ENCODE measurements at regions of chr9 and their contacts with region 1.

Region 1: GRCh38 chr9:109012876-109013678 is at the start of gene CTNNAL1:
- DNase-seq: peak; percentile 68 to 95 (median 85)
- ATAC-seq: peak; percentile 82
- H3K4me3 ChIP-seq: peak within 1 kb of the TSS; percentile 65
- H3K4me3 Mint-ChIP-seq: peak within 1 kb of the TSS; percentile 100
- H3K27ac ChIP-seq: peak within 1 kb of the TSS; percentile 43 to 65
- H3K27ac Mint-ChIP-seq: peak within 1 kb of the TSS; percentile 88
- H3K4me1 ChIP-seq: peaks cover 16% of the 10 kb centered on the region
- H3K4me1 Mint-ChIP-seq: peaks cover 32% of the 10 kb centered on the region
- H3K27me3 ChIP-seq: no peaks in the 10 kb centered on the region
- H3K27me3 Mint-ChIP-seq: peaks cover 10% of the 10 kb centered on the region
- CTCF ChIP-seq: no peak
- total RNA-seq, gene CTNNAL1: 4.9 to 5.3 TPM

Region 2: GRCh38 chr9:107637421-107638420 is 1375.4 kb before region 1 on chr9:
- CTCF ChIA-PET with region 1: no interaction called
- POLR2A ChIA-PET with region 1: no interaction called
- intact Hi-C with region 1: no loop called
- DNase-seq: peak in 3 of 14 experiments; percentile 24 to 72 (median 63)
- ATAC-seq: no peak
- H3K4me3 ChIP-seq: peak overlapping the region; percentile 25
- H3K4me3 Mint-ChIP-seq: no peak overlapping the region
- H3K27ac ChIP-seq: peak overlapping the region in 1 of 2 donors; percentile 44
- H3K27ac Mint-ChIP-seq: no peak overlapping the region
- H3K4me1 ChIP-seq: peaks cover 3% of the 10 kb centered on the region
- H3K4me1 Mint-ChIP-seq: peaks cover 9% of the 10 kb centered on the region
- H3K27me3 ChIP-seq: peaks cover 11 to 17% of the 10 kb centered on the region in 2 experiments
- H3K27me3 Mint-ChIP-seq: peaks cover 62% of the 10 kb centered on the region
- CTCF ChIP-seq: no peak

Region 3: GRCh38 chr9:109098171-109098959 is 85.3 kb after region 1 on chr9:
- CTCF ChIA-PET with region 1: no interaction called
- POLR2A ChIA-PET with region 1: no interaction called
- intact Hi-C with region 1: loop called in 1 of 2 experiments (anchors 5 kb)
- DNase-seq: no peak
- ATAC-seq: no peak
- H3K4me3 ChIP-seq: no peak overlapping the region
- H3K4me3 Mint-ChIP-seq: peak overlapping the region; percentile 11
- H3K27ac ChIP-seq: no peak overlapping the region
- H3K27ac Mint-ChIP-seq: peak overlapping the region; percentile 69
- H3K4me1 ChIP-seq: peaks cover 52% of the 10 kb centered on the region
- H3K4me1 Mint-ChIP-seq: peaks cover 95% of the 10 kb centered on the region
- H3K27me3 ChIP-seq: no peaks in the 10 kb centered on the region
- H3K27me3 Mint-ChIP-seq: no peaks in the 10 kb centered on the region
- CTCF ChIP-seq: no peak

Region 4: DNA sequence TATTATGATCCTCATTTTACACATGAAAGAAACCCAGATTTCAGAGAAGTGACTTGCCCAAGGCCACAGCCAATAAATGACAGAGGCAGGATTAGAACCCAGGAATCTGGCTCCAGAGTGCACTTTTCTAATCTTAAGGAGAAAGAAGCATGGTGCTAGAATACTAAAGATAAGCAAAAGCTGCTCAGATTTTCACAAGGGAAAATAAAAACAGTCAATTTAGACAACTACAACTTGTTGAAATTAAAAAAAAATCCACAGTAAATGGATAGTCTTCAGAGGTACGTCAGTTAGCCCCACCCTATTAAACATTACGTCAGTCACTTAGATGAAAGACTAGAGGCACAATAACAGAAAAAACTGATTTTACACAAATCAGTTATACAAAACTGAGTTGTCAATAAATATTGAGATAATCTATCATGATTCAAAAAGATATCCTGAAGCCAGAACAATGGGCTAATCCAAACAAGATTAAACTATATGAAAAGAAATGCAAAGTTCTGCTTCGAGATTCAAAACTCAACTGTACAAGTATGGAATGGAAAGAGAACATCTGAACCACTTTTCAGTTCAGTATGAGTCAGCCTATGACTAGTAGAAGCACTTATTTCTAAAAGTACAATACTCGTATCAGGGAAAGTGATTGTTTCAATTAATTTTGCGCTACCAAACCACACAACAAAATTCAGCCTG is 97.4 kb after region 1 on chr9:
- CTCF ChIA-PET with region 1: interaction called, 3 read pairs
- POLR2A ChIA-PET with region 1: no interaction called
- intact Hi-C with region 1: loop called in 1 of 2 experiments (anchors 5 kb)
- DNase-seq: peak in 4 of 14 experiments; percentile 14 to 82 (median 74)
- ATAC-seq: peak; percentile 80
- H3K4me3 ChIP-seq: peak overlapping the region; percentile 31
- H3K4me3 Mint-ChIP-seq: peak overlapping the region; percentile 61
- H3K27ac ChIP-seq: peak overlapping the region; percentile 39 to 76
- H3K27ac Mint-ChIP-seq: peak overlapping the region; percentile 90
- H3K4me1 ChIP-seq: peaks cover 37% of the 10 kb centered on the region
- H3K4me1 Mint-ChIP-seq: peaks cover 86% of the 10 kb centered on the region
- H3K27me3 ChIP-seq: no peaks in the 10 kb centered on the region
- H3K27me3 Mint-ChIP-seq: no peaks in the 10 kb centered on the region
- CTCF ChIP-seq: no peak

Measured in CD4-positive, alpha-beta T cell (primary cell).